ENCODE measurements at regions of chr18 and their contacts with region 1.

Region 1: DNA sequence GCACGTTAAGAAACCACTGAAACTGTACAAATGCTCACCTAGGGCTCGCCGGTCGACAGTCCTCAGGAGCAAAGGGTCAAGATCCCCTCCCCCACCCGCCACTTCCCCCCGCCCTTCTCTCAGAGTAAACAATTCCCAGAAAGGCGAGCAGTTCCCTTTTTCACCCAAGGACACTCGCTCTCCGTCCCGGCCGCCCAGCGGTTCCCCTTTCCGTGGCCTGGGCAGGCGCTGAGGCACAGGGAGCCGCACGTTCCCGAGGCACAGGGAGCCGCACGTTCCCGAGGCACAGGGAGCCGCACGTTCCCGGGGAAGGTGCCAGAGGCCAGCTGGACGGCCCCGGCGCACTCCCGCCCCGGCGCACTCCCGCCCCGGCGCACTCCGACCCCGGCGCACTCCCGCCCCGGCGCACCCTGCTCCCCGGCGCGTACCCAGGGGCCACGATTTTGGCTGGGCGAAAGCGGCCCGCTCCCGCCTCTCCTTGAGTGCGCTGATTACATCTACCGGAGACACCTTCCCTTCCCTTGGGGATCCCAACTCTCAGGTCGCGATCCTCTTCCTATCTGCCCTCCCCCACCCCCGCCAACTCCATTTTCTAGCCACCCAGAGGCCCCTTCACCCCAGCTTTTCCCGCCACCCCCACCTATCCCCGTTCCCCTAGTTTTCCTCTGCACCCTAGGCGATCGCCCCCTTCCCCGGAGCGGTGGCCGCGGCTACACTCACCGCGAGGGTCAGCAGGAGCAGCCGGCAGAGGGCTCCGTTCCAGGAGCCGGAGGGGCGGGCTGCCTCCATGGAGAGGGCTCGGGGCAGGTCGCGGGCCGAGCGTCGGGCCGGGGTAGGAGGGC is 817 bp downstream of the DSC2 start:
- DNase-seq: peak; percentile 73
- H3K4me3 ChIP-seq: peak overlapping the region; percentile 29 to 96 (median 76)
- H3K27ac ChIP-seq: peak overlapping the region; percentile 92 to 98 (median 96)
- H3K4me1 ChIP-seq: peaks cover 0 to 30% (median 18%) of the 10 kb centered on the region in 4 donors
- H3K27me3 ChIP-seq: peaks cover 5% of the 10 kb centered on the region
- CTCF ChIP-seq: no peak
- EP300 ChIP-seq: no peak
- POLR2A ChIP-seq: peak; percentile 68

Region 2: DNA sequence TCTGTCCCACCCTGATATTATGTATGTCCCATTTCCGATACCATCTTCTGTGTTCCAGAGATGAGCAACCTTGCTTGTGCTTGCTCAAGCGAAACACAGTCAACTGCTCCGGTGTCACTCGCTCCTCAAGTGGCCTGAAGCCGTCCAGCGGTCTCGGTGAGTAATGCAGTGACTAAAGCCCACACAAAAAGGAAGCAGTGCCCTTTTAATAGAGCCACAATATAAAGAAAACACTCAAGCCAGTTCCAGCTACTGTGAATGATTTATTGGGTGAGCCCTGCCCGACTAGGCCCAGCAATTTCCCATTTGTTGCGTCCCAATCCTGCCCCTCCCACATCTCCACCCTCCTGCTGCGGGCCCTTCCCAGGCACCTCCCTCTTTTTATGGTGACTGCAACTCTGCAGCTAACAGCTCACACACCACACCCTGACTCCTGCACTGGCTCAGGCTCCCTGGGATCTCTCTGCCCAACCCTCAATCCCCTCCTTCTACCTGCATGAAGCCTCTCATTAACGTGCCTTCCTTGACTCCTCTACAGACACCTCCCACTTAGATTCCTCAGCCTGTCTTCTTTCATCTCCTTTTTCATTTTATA is 105.5 kb after region 1 on chr18:
- in situ Hi-C with region 1: loop called in 1 of 4 experiments (anchors 10 kb)
- intact Hi-C with region 1: no loop called
- DNase-seq: peak; percentile 91
- H3K4me3 ChIP-seq: peak overlapping the region in 2 of 4 donors; percentile 21 to 35
- H3K27ac ChIP-seq: peak overlapping the region; percentile 78 to 87 (median 86)
- H3K4me1 ChIP-seq: peaks cover 5 to 48% (median 26%) of the 10 kb centered on the region in 4 donors
- H3K27me3 ChIP-seq: no peaks in the 10 kb centered on the region
- CTCF ChIP-seq: peak in 4 of 5 experiments; percentile 43 to 93 (median 64)
- EP300 ChIP-seq: no peak
- POLR2A ChIP-seq: peak; percentile 83

Region 3: GRCh38 chr18:31424383-31424988 is 323.1 kb after region 1 on chr18:
- in situ Hi-C with region 1: loop called in 1 of 4 experiments (anchors 25 kb)
- intact Hi-C with region 1: no loop called
- DNase-seq: peak; percentile 48
- H3K4me3 ChIP-seq: no peak overlapping the region
- H3K27ac ChIP-seq: no peak overlapping the region
- H3K4me1 ChIP-seq: peaks cover 0 to 4% (median 0%) of the 10 kb centered on the region in 4 donors
- H3K27me3 ChIP-seq: no peaks in the 10 kb centered on the region
- CTCF ChIP-seq: peak; percentile 51 to 74 (median 67)
- EP300 ChIP-seq: no peak
- POLR2A ChIP-seq: no peak

Region 4: DNA sequence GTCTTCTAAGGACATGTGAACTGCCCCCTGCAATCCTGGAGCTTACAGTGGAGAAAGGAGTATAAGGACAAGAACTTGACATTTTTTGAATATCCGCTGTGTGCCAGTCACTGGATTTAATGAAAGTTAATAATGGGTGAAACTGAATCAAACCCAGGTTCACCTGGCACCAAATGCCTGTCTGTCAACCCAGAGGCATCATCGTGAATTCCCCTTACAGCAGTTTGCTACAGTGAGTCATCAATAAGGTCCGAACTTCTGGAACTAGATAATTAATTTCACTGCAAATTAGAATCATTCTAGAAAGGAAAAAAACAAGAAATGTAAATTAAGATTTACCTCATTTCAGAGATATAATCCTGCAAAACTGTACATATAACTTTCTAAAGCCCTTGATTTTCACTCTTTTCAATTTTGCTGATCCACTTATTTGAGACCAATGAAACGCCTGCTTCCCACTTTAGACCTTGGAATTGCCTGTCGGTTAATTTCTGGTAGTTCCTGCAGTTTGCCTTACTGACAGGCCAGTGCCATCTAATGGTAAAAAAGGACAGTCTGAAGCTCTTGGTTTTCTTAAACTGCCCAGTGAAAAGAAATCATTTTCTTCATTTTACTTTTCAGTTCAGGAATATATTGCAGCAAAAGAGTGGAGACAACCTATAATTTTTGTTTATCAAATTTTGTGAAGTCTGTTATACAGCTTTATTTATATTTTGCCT is 404.8 kb after region 1 on chr18:
- in situ Hi-C with region 1: loop called in 1 of 4 experiments (anchors 25 kb)
- intact Hi-C with region 1: no loop called
- DNase-seq: no peak
- H3K4me3 ChIP-seq: no peak overlapping the region
- H3K27ac ChIP-seq: peak overlapping the region in 2 of 4 donors; percentile 11 to 77
- H3K4me1 ChIP-seq: peaks cover 0 to 40% (median 9%) of the 10 kb centered on the region in 4 donors
- H3K27me3 ChIP-seq: no peaks in the 10 kb centered on the region
- CTCF ChIP-seq: peak in 2 of 5 experiments; percentile 21
- EP300 ChIP-seq: no peak
- POLR2A ChIP-seq: no peak

Region 5: GRCh38 chr18:31546476-31546875 is 445.1 kb after region 1 on chr18:
- in situ Hi-C with region 1: loop called in 2 of 4 experiments (anchors 25 kb)
- intact Hi-C with region 1: no loop called
- DNase-seq: no peak
- H3K4me3 ChIP-seq: no peak overlapping the region
- H3K27ac ChIP-seq: no peak overlapping the region
- H3K4me1 ChIP-seq: peaks cover 0 to 19% (median 0%) of the 10 kb centered on the region in 4 donors
- H3K27me3 ChIP-seq: no peaks in the 10 kb centered on the region
- CTCF ChIP-seq: no peak
- EP300 ChIP-seq: no peak
- POLR2A ChIP-seq: no peak